PC-3 (cell line): ENCODE measurements at regions of chr5 and their contacts with region 1.

Region 1: DNA sequence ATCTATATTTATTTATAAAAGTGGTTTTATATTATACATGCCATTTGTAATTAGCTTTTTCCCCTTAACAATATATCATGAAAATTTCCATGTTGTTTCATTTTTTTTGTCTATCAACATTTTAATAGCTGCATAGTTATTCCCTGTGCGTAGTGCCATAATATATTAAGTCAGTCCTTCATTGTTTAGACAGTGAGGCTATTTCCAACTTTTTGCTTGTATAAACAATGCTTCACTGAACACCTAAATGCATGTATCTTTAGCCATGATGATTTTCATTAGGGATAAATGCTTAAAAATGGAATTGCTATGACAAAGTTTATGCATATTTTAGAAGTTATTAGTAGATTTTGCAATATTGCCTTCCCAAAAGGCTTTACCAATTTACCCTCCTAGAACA is 80.7 kb upstream of the STC2 start:
- DNase-seq: no peak
- ATAC-seq: peak; percentile 40; the same call in 1 of the 2 replicates
- H3K4me3 ChIP-seq: peak overlapping the region; percentile 55
- H3K27ac ChIP-seq: no peak overlapping the region
- H3K4me1 ChIP-seq: peaks cover 5% of the 10 kb centered on the region
- H3K27me3 ChIP-seq: no peaks in the 10 kb centered on the region
- CTCF ChIP-seq: no peak

Region 2: GRCh38 chr5:173144200-173145176 is 264.5 kb before region 1 on chr5 and contains the start of gene BNIP1:
- CTCF ChIA-PET with region 1: no interaction called
- POLR2A ChIA-PET with region 1: interaction called, 16 read pairs
- intact Hi-C with region 1: no loop called
- DNase-seq: peak; percentile 97
- ATAC-seq: peak; percentile 97
- H3K4me3 ChIP-seq: peak within 1 kb of the TSS; percentile 88
- H3K27ac ChIP-seq: peak within 1 kb of the TSS; percentile 82
- H3K4me1 ChIP-seq: no peaks in the 10 kb centered on the region; the same call in 1 of the 2 replicates
- H3K27me3 ChIP-seq: no peaks in the 10 kb centered on the region
- CTCF ChIP-seq: peak; percentile 79
- total RNA-seq, gene BNIP1: 17.0 and 21.5 TPM in 2 replicates

Region 3: GRCh38 chr5:173472141-173472543 is 63.2 kb after region 1 on chr5:
- CTCF ChIA-PET with region 1: no interaction called
- POLR2A ChIA-PET with region 1: no interaction called
- intact Hi-C with region 1: no loop called
- DNase-seq: peak; percentile 99
- ATAC-seq: peak; percentile 96
- H3K4me3 ChIP-seq: no peak overlapping the region
- H3K27ac ChIP-seq: peak overlapping the region; percentile 88
- H3K4me1 ChIP-seq: peaks cover 23% of the 10 kb centered on the region
- H3K27me3 ChIP-seq: no peaks in the 10 kb centered on the region
- CTCF ChIP-seq: no peak

Region 4: GRCh38 chr5:173573126-173573960 is 164.4 kb after region 1 on chr5:
- CTCF ChIA-PET with region 1: no interaction called
- POLR2A ChIA-PET with region 1: no interaction called
- intact Hi-C with region 1: no loop called
- DNase-seq: peak; percentile 86
- ATAC-seq: peak; percentile 94
- H3K4me3 ChIP-seq: peak overlapping the region; percentile 46; the same call in 1 of the 2 replicates
- H3K27ac ChIP-seq: no peak overlapping the region
- H3K4me1 ChIP-seq: peaks cover 11% of the 10 kb centered on the region
- H3K27me3 ChIP-seq: no peaks in the 10 kb centered on the region
- CTCF ChIP-seq: peak; percentile 97